Activated CD4-positive, alpha-beta T cell treated with anti-CD3 and anti-CD28 coated beads, Interleukin-2, amount 10 ng/mL, durations not matched to agents 24 days and 14 days (primary cell): ENCODE measurements at regions of chr13 and their contacts with region 1.

Region 1: DNA sequence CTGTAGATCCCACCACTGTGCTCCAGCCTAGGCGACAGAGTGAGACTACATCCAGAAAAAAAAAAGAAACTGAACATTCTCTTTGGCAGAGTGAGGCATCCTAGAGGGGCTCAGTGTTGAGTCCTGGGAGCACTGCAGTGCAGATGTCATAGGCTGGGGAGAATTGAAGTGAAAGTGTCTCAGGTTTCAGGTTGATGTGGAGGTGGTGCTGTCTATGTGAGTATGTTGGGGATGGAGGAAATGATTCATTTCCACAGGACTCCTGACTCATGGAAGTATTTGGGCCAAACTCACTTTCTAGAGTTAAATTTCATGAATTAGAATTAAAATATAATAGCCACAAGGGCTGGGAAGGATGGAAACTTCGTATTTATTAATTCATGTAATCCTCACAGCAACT is 134.4 kb upstream of the TSC22D1 start:
- DNase-seq: no peak
- H3K4me3 Mint-ChIP-seq: no peak overlapping the region
- H3K27ac Mint-ChIP-seq: no peak overlapping the region
- H3K4me1 Mint-ChIP-seq: peaks cover 14% of the 10 kb centered on the region
- H3K27me3 Mint-ChIP-seq: peaks cover 18% of the 10 kb centered on the region

Region 2: DNA sequence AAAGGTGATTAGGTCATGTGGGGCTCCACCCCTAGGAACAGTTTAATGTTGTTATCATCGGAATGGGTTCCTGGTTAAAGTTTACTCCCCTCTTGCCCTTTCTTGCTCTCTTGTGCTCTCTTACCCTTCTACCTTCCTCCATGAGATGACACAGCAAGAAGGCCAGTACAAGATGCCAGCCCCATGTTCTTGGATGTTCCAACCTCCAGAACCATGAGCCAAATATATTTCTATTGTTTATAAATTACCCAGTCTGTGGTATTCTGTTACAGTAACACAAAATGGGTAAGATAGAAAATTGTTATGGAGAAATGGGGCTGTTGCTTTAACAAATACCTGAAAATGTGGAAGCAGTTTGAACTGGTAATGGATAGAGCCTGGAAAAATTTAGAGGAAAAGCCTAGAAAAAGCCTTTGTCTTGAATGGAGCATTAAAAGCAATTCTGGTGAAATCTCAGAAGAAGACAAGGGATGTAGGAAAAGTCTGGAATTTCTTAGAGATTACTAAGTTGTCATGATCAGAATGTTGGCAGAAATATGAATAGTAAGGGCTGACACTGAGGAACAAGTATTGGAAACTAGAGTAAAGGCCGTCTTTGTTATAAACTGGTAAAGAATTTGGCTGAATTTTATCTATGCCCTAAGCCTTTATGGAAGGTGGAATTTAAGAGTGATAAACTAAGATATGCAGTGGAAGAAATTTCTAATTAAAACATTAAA is 81.0 kb before region 1 on chr13:
- intact Hi-C with region 1: no loop called
- DNase-seq: no peak
- H3K4me3 Mint-ChIP-seq: no peak overlapping the region
- H3K27ac Mint-ChIP-seq: no peak overlapping the region
- H3K4me1 Mint-ChIP-seq: no peaks in the 10 kb centered on the region
- H3K27me3 Mint-ChIP-seq: peaks cover 9% of the 10 kb centered on the region

Region 3: GRCh38 chr13:44758630-44759383 is 48.2 kb after region 1 on chr13:
- intact Hi-C with region 1: loop called (anchors 2 kb)
- DNase-seq: peak; percentile 60
- H3K4me3 Mint-ChIP-seq: no peak overlapping the region
- H3K27ac Mint-ChIP-seq: peak overlapping the region; percentile 66
- H3K4me1 Mint-ChIP-seq: peaks cover 21% of the 10 kb centered on the region
- H3K27me3 Mint-ChIP-seq: no peaks in the 10 kb centered on the region

Region 4: DNA sequence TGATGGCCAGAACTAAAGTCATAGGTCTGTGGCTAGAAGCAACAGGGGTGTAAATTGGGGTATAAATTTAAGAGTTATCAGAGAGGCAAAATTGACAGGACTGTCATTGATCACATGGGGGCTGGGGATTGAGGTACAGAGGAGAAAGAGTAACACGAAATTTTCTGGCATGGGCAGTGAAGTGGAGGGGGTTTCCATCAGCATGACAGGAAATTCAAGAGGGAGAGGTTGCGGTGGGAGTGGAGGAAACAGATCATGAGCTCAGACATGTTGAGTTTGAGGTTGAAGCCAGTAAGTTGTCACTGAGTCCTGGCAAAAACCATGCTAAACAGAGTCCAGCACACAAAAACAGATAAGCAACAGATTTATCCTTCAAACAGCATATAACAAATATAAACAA is 57.7 kb after region 1 on chr13:
- intact Hi-C with region 1: loop called (anchors 1 kb)
- DNase-seq: peak; percentile 88
- H3K4me3 Mint-ChIP-seq: peak overlapping the region; percentile 54
- H3K27ac Mint-ChIP-seq: peak overlapping the region; percentile 79
- H3K4me1 Mint-ChIP-seq: peaks cover 35% of the 10 kb centered on the region
- H3K27me3 Mint-ChIP-seq: no peaks in the 10 kb centered on the region

Region 5: GRCh38 chr13:44815623-44816022 is 105.0 kb after region 1 on chr13:
- intact Hi-C with region 1: loop called (anchors 1 kb)
- DNase-seq: peak; percentile 71
- H3K4me3 Mint-ChIP-seq: no peak overlapping the region
- H3K27ac Mint-ChIP-seq: no peak overlapping the region
- H3K4me1 Mint-ChIP-seq: peaks cover 16% of the 10 kb centered on the region
- H3K27me3 Mint-ChIP-seq: peaks cover 29% of the 10 kb centered on the region